Natural killer cell (primary cell): ENCODE measurements at regions of chr9 and their contacts with region 1.

Region 1: DNA sequence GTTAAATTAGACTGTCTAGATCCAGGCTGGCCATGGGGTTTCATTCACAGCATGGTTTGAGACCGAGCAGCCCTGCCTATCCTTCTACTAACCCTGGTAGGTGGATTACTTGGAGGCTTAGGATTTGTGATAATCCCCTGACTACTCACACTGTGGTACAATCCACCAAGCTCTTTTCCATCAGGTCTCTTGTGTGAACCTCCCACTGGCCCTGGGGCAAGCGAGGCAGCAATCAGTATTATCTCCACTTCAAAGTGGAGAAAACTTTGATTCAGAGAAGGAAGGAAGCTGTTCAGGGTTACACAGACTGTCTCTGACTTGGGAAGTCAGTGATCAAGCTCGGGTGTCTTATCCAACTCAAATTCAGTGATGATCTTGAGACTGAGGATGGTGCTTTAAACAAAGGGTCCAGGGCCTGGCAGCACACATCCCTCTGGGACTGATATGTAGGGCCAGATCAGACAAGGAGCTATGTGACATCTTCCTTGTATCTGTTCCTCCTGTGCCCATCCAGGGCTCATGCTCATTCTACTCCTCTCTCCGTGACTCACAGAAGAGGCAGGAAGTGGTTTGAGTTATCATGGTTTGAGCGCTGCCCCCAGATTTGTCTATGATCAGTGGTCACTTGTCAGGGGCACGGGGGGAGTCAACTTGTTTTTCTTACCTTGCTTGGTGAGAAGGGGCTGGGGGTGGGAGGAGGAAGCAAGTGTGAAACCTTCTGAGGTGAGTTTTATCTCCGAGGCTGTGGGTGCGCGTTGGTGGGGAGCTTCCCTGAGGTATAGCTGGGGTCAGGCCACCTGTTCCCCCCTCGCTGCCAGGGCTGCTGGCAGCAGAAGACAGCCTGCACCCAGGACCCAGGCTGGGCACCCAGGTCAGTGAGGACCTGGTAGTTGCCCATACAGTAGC is 48.6 kb downstream of the RGS3 start:
- DNase-seq: peak; percentile 67 to 82
- ATAC-seq: peak; percentile 60 to 76 (median 62)
- H3K4me3 ChIP-seq: no peak overlapping the region
- H3K4me3 Mint-ChIP-seq: peak overlapping the region; percentile 71
- H3K27ac ChIP-seq: peak overlapping the region; percentile 64
- H3K27ac Mint-ChIP-seq: peak overlapping the region; percentile 85 to 93
- H3K4me1 ChIP-seq: peaks cover 70% of the 10 kb centered on the region
- H3K4me1 Mint-ChIP-seq: peaks cover 64 to 70% of the 10 kb centered on the region in 2 donors
- H3K27me3 ChIP-seq: no peaks in the 10 kb centered on the region
- H3K27me3 Mint-ChIP-seq: no peaks in the 10 kb centered on the region
- CTCF ChIP-seq: no peak

Region 2: DNA sequence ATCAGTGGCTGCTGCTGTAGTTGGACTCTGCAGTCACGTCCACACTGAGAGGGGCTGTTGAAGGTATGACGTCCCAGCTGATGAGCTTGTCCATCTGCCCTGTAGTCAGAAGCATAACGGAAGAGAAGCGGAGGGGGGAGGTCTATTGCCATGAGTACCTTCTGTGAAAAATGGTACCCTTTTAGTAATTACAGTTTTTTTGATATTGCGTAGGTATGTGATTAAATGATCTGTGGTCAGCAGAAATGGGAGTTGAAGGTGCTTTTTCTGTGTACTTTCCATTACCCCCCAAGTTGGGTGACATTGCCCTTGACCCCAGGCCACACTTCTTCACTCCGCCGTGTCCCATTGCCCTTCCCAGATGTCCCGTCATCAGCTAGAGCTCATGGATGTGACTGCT is 715.6 kb before region 1 on chr9:
- intact Hi-C with region 1: no loop called
- DNase-seq: no peak
- ATAC-seq: no peak
- H3K4me3 ChIP-seq: no peak overlapping the region
- H3K4me3 Mint-ChIP-seq: no peak overlapping the region
- H3K27ac ChIP-seq: no peak overlapping the region
- H3K27ac Mint-ChIP-seq: no peak overlapping the region
- H3K4me1 ChIP-seq: peaks cover 4% of the 10 kb centered on the region
- H3K4me1 Mint-ChIP-seq: peaks cover 5 to 17% of the 10 kb centered on the region in 2 donors
- H3K27me3 ChIP-seq: no peaks in the 10 kb centered on the region
- H3K27me3 Mint-ChIP-seq: no peaks in the 10 kb centered on the region
- CTCF ChIP-seq: no peak

Region 3: DNA sequence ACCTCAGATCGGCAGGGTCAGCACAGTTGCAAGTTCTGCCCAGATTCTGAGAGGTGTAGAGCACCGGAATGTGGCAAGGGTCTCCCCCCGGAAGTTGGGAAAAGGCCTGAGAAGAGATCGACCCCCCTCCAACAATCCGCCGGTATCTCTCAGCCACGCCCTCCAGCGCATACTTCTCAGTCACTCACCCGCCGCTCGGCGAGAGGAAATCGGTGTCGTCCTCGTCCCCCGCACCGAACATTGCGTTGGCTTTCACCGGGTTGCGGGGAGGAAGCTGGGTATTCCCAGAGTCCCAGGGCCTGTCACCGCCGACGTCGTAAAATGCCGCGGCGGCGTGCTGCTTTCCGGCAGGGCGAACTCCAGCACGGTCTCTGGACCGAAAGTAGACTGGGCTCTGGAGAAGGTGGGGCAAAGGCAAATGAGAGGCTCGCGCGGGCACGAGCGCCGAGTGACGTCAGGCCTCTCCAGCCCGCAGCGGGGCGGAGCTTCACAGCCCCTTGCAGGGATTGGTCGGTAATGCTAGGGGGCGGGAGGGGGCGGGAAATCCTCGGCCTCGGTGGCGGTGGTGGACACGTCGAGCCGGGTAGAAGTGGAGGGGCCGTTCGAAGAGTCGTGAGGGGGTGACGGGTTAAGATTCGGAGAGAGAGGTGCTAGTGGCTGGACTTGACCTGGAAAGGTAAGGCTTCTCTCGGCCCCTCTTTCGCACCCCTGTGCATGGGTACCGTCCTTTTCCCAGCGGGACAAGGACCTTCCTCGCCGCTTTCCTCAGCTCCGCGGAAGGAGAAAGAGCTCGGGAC is 290.9 kb before region 1 on chr9 and contains the starts of genes FKBP15 and SLC31A1:
- intact Hi-C with region 1: loop called (anchors 1 kb)
- DNase-seq: peak; percentile 96 to 99
- ATAC-seq: peak; percentile 91 to 99 (median 95)
- H3K4me3 ChIP-seq: peak within 1 kb of the TSS; percentile 96
- H3K4me3 Mint-ChIP-seq: peak within 1 kb of the TSS; percentile 97
- H3K27ac ChIP-seq: peak within 1 kb of the TSS; percentile 92
- H3K27ac Mint-ChIP-seq: peak within 1 kb of the TSS; percentile 82 to 92
- H3K4me1 ChIP-seq: peaks cover 21% of the 10 kb centered on the region
- H3K4me1 Mint-ChIP-seq: peaks cover 44 to 52% of the 10 kb centered on the region in 2 donors
- H3K27me3 ChIP-seq: no peaks in the 10 kb centered on the region
- H3K27me3 Mint-ChIP-seq: no peaks in the 10 kb centered on the region
- CTCF ChIP-seq: no peak
- total RNA-seq, gene FKBP15: 35.0 to 37.9 (median 35.9) TPM
- total RNA-seq, gene SLC31A1: 7.9 to 27.8 (median 11.8) TPM

Region 4: DNA sequence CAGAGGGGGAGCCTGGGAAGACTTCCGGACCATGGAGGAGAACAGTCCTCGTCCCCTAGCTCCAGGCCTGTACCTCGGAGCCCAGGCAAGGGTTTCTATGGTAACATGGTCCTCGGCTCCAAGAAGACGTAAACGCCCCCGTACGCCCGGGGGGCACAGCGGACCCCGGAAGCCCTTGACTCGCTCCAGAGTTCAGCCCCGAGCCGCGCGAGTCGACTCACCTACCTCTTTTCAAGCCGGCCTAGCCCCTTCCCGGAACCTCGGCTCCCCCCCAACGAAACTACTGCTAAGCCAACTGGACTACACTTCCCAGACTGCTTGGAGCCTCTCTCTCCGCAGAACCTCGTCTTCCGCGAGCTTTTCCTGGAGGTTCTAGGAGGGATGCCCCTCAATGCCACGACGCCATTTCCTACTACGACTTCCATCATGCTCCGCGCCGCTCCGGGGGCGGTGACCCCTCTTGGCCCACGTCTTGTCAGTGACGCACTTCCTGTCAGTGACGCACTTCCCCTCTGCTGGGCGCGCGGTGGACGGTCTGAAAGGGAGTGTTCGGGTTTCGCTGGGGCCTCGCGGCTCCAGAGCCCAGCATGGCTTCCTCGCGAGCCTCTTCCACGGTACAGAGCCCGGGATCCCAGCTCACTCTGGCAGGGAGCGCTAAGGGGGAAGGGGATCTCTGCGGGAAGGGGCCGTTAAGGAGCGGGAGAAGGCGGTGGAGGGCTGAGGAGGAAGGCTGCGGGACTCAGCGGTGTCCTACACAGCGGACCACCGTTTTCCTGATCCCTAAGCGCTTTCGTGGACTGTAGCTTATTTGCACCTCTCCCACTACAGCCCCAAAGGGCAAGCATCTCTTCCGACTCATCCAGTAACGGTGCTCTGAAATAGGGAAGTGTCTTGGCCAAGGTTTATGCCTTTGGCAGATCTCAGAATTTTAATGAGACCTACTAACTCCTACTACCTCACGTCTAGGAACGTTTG is 236.7 kb before region 1 on chr9 and contains the starts of genes CDC26 and PRPF4:
- intact Hi-C with region 1: loop called (anchors 10 kb)
- DNase-seq: peak; percentile 92 to 99
- ATAC-seq: peak; percentile 94 to 99 (median 97)
- H3K4me3 ChIP-seq: peak within 1 kb of the TSS; percentile 89
- H3K4me3 Mint-ChIP-seq: no peak within 1 kb of the TSS
- H3K27ac ChIP-seq: peak within 1 kb of the TSS; percentile 95
- H3K27ac Mint-ChIP-seq: no peak within 1 kb of the TSS
- H3K4me1 ChIP-seq: peaks cover 8% of the 10 kb centered on the region
- H3K4me1 Mint-ChIP-seq: peaks cover 8 to 15% of the 10 kb centered on the region in 2 donors
- H3K27me3 ChIP-seq: no peaks in the 10 kb centered on the region
- H3K27me3 Mint-ChIP-seq: no peaks in the 10 kb centered on the region
- CTCF ChIP-seq: no peak
- total RNA-seq, gene CDC26: 16.8 to 24.8 (median 21.5) TPM
- total RNA-seq, gene PRPF4: 16.9 to 23.2 (median 21.1) TPM

Region 5: GRCh38 chr9:113410207-113410864 is 101.8 kb before region 1 on chr9 and contains the starts of genes C9orf43 and POLE3:
- intact Hi-C with region 1: loop called (anchors 2 kb)
- DNase-seq: peak; percentile 94 to 97
- ATAC-seq: peak; percentile 88 to 97 (median 91)
- H3K4me3 ChIP-seq: peak within 1 kb of the TSS; percentile 78
- H3K4me3 Mint-ChIP-seq: peak within 1 kb of the TSS; percentile 94
- H3K27ac ChIP-seq: peak within 1 kb of the TSS; percentile 95
- H3K27ac Mint-ChIP-seq: peak within 1 kb of the TSS; percentile 96 to 99
- H3K4me1 ChIP-seq: peaks cover 23% of the 10 kb centered on the region
- H3K4me1 Mint-ChIP-seq: peaks cover 24 to 28% of the 10 kb centered on the region in 2 donors
- H3K27me3 ChIP-seq: no peaks in the 10 kb centered on the region
- H3K27me3 Mint-ChIP-seq: no peaks in the 10 kb centered on the region
- CTCF ChIP-seq: no peak
- total RNA-seq, gene C9orf43: 0.45 to 0.71 (median 0.50) TPM
- total RNA-seq, gene POLE3: 59.2 to 66.7 (median 62.2) TPM

Region 6: GRCh38 chr9:113446323-113446740 is 65.8 kb before region 1 on chr9:
- intact Hi-C with region 1: loop called (anchors 2 kb)
- DNase-seq: peak in 1 of 2 donors; percentile 68
- ATAC-seq: peak in 2 of 3 donors; percentile 52 to 66
- H3K4me3 ChIP-seq: no peak overlapping the region
- H3K4me3 Mint-ChIP-seq: no peak overlapping the region
- H3K27ac ChIP-seq: no peak overlapping the region
- H3K27ac Mint-ChIP-seq: no peak overlapping the region
- H3K4me1 ChIP-seq: no peaks in the 10 kb centered on the region
- H3K4me1 Mint-ChIP-seq: peaks cover 0 to 5% of the 10 kb centered on the region in 2 donors
- H3K27me3 ChIP-seq: no peaks in the 10 kb centered on the region
- H3K27me3 Mint-ChIP-seq: no peaks in the 10 kb centered on the region
- CTCF ChIP-seq: peak; percentile 82

Region 7: DNA sequence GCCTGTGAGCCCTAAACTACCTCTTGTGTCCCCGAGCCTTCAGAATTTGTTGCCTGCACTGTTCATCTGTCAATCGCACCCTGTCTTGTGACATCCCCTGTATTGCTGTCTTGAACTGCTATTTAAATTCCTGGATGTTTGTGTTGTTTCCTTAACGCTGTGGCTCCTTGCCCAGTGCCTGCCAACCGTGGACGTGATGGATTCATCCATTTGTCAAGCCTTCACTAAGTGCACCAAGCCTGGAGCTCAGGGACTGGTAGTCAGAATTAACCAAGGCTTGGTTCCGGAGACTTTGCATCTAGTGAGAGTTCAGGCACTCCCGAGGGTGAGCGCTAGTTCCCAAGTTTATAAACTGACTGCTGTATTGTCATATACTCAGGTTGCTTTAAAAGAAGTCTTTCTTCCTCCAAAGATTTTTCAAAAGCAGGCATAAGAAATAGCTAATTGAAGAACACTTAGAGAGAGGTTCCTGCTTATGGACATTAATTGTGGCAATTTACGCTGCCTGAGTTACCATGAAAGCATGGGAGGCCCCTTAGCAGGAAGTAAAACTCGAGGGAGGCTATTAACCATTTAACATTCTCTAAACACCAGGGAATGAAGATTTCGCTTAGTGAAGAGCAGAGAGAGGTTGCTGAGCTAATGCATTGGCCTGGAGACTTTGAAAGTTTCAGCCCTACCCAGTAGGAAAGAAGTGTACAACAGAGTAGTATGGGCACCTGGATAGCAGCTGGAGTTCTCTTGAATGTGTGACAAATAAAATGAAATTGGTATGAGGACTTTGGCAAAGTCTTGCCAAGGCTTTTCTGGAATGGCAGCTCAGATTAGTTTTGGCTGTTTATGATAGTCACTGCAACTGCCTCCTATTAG is 19.5 kb before region 1 on chr9:
- intact Hi-C with region 1: no loop called
- DNase-seq: no peak
- ATAC-seq: no peak
- H3K4me3 ChIP-seq: no peak overlapping the region
- H3K4me3 Mint-ChIP-seq: no peak overlapping the region
- H3K27ac ChIP-seq: no peak overlapping the region
- H3K27ac Mint-ChIP-seq: peak overlapping the region in 1 of 2 donors; percentile 38
- H3K4me1 ChIP-seq: no peaks in the 10 kb centered on the region
- H3K4me1 Mint-ChIP-seq: peaks cover 23 to 26% of the 10 kb centered on the region in 2 donors
- H3K27me3 ChIP-seq: no peaks in the 10 kb centered on the region
- H3K27me3 Mint-ChIP-seq: peaks cover 0 to 9% of the 10 kb centered on the region in 2 donors
- CTCF ChIP-seq: no peak

Region 8: DNA sequence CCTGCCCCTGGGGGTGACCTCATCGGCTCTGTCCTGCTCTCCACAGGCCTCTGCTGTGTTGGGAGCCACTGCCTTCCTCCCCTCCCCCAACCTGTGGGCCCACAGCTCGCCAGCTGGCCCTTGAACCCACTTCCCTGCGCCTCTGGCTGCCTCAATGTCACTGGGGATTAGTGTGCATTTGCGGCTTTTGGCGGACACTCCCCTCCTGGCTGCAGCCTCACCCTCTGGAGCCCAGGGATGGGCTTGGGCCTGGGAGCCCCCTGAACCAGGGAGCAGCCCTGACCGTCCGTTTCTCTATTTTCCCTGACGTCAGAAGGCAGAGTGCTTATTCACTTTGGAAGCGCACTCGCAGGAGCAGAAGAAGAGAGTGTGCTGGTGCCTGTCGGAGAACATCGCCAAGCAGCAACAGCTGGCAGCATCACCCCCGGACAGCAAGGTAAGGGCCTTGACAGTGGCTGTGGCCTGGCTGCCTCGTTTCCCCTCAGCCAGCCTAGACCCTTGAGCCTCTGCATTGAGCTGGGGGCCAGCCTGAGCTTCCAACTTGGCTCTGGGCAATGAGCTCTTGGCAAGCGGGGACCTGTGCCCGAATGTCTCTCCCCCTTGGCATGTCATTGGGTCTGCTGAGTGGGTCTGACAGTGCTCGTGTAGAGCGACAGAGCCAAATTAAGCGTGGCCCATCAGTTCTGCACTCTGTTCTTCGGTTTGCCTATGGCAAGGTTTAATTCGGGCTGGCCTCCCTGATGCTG is 24.5 kb after region 1 on chr9:
- intact Hi-C with region 1: no loop called
- DNase-seq: no peak
- ATAC-seq: no peak
- H3K4me3 ChIP-seq: no peak overlapping the region
- H3K4me3 Mint-ChIP-seq: peak overlapping the region; percentile 61
- H3K27ac ChIP-seq: no peak overlapping the region
- H3K27ac Mint-ChIP-seq: peak overlapping the region; percentile 92 to 98
- H3K4me1 ChIP-seq: peaks cover 84% of the 10 kb centered on the region
- H3K4me1 Mint-ChIP-seq: peaks cover 80 to 85% of the 10 kb centered on the region in 2 donors
- H3K27me3 ChIP-seq: no peaks in the 10 kb centered on the region
- H3K27me3 Mint-ChIP-seq: no peaks in the 10 kb centered on the region
- CTCF ChIP-seq: no peak

Region 9: GRCh38 chr9:113578882-113579282 is 66.8 kb after region 1 on chr9:
- intact Hi-C with region 1: loop called (anchors 1 kb)
- DNase-seq: peak; percentile 88 to 90
- ATAC-seq: peak; percentile 62 to 80 (median 78)
- H3K4me3 ChIP-seq: no peak overlapping the region
- H3K4me3 Mint-ChIP-seq: peak overlapping the region; percentile 77
- H3K27ac ChIP-seq: peak overlapping the region; percentile 81
- H3K27ac Mint-ChIP-seq: peak overlapping the region; percentile 92 to 93
- H3K4me1 ChIP-seq: peaks cover 86% of the 10 kb centered on the region
- H3K4me1 Mint-ChIP-seq: peaks cover 88 to 100% of the 10 kb centered on the region in 2 donors
- H3K27me3 ChIP-seq: no peaks in the 10 kb centered on the region
- H3K27me3 Mint-ChIP-seq: no peaks in the 10 kb centered on the region
- CTCF ChIP-seq: no peak

Region 10: GRCh38 chr9:113906411-113907110 is 394.5 kb after region 1 on chr9:
- intact Hi-C with region 1: no loop called
- DNase-seq: no peak
- ATAC-seq: no peak
- H3K4me3 ChIP-seq: no peak overlapping the region
- H3K4me3 Mint-ChIP-seq: no peak overlapping the region
- H3K27ac ChIP-seq: no peak overlapping the region
- H3K27ac Mint-ChIP-seq: no peak overlapping the region
- H3K4me1 ChIP-seq: no peaks in the 10 kb centered on the region
- H3K4me1 Mint-ChIP-seq: peaks cover 0 to 8% of the 10 kb centered on the region in 2 donors
- H3K27me3 ChIP-seq: no peaks in the 10 kb centered on the region
- H3K27me3 Mint-ChIP-seq: no peaks in the 10 kb centered on the region
- CTCF ChIP-seq: no peak